CD4-positive, alpha-beta memory T cell (primary cell): ENCODE measurements at regions of chr13 and their contacts with region 1.

Region 1: DNA sequence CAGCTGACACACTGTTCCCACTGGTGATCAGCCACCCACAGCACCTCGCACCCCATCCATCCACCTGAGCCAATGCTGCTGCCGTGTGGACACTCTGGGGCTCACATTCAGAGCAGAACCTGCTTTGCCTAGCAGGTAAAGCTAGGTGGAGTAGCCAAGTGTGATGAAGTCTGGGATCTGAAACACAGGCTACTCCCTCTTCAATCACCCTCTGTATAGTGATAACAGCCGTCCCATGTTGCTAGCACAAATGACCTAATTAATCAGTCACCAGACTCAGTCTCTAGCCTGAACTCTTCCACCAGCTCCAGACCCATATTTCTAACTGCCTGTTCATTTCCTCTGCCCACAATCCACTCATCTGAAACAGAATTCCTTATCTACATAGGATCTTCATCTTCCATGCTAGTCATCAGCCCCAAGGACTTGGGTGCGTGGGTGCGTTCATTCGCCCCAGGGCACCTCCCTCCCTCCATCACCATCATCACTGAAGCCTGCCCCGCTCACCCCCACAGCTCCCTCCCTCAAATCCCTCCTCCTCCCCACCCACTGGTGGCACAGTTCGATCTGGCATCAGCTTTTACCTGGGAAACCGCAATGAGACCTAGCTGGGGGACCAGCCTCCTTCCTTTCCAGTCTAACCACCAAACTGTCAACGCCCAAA is 19.8 kb downstream of the STK24 start:
- DNase-seq: peak in 4 of 5 donors; percentile 42 to 67 (median 48)
- H3K4me3 ChIP-seq: no peak overlapping the region
- H3K4me3 Mint-ChIP-seq: peak overlapping the region; percentile 55 to 78 (median 72)
- H3K27ac ChIP-seq: peak overlapping the region; percentile 37
- H3K27ac Mint-ChIP-seq: peak overlapping the region; percentile 70 to 95 (median 84)
- H3K4me1 ChIP-seq: peaks cover 92% of the 10 kb centered on the region
- H3K4me1 Mint-ChIP-seq: peaks cover 67 to 93% (median 78%) of the 10 kb centered on the region in 4 donors
- H3K27me3 ChIP-seq: no peaks in the 10 kb centered on the region
- H3K27me3 Mint-ChIP-seq: no peaks in the 10 kb centered on the region

Region 2: GRCh38 chr13:98542568-98543377 is 14.3 kb before region 1 on chr13:
- CTCF ChIA-PET with region 1: interaction called, 6 read pairs
- POLR2A ChIA-PET with region 1: interaction called, 13 read pairs
- intact Hi-C with region 1: no loop called
- DNase-seq: peak in 2 of 5 donors; percentile 26 to 30
- H3K4me3 ChIP-seq: peak overlapping the region in 1 of 2 donors; percentile 17
- H3K4me3 Mint-ChIP-seq: peak overlapping the region; percentile 68 to 86 (median 81)
- H3K27ac ChIP-seq: peak overlapping the region; percentile 36
- H3K27ac Mint-ChIP-seq: peak overlapping the region; percentile 59 to 93 (median 87)
- H3K4me1 ChIP-seq: peaks cover 95% of the 10 kb centered on the region
- H3K4me1 Mint-ChIP-seq: peaks cover 76 to 98% (median 88%) of the 10 kb centered on the region in 4 donors
- H3K27me3 ChIP-seq: no peaks in the 10 kb centered on the region
- H3K27me3 Mint-ChIP-seq: no peaks in the 10 kb centered on the region

Region 3: GRCh38 chr13:98570929-98571372 is 13.9 kb after region 1 on chr13:
- CTCF ChIA-PET with region 1: interaction called, 10 read pairs
- POLR2A ChIA-PET with region 1: interaction called, 87 read pairs
- intact Hi-C with region 1: no loop called
- DNase-seq: peak; percentile 50 to 75 (median 61)
- H3K4me3 ChIP-seq: peak overlapping the region; percentile 77 to 90
- H3K4me3 Mint-ChIP-seq: peak overlapping the region; percentile 86 to 97 (median 94)
- H3K27ac ChIP-seq: peak overlapping the region; percentile 81
- H3K27ac Mint-ChIP-seq: peak overlapping the region; percentile 95 to 98 (median 98)
- H3K4me1 ChIP-seq: peaks cover 96% of the 10 kb centered on the region
- H3K4me1 Mint-ChIP-seq: peaks cover 70 to 99% (median 85%) of the 10 kb centered on the region in 4 donors
- H3K27me3 ChIP-seq: no peaks in the 10 kb centered on the region
- H3K27me3 Mint-ChIP-seq: no peaks in the 10 kb centered on the region

Region 4: GRCh38 chr13:98672944-98673545 is 115.9 kb after region 1 on chr13:
- CTCF ChIA-PET with region 1: no interaction called
- POLR2A ChIA-PET with region 1: no interaction called
- intact Hi-C with region 1: no loop called
- DNase-seq: peak; percentile 36 to 53 (median 46)
- H3K4me3 ChIP-seq: no peak overlapping the region
- H3K4me3 Mint-ChIP-seq: no peak overlapping the region
- H3K27ac ChIP-seq: no peak overlapping the region
- H3K27ac Mint-ChIP-seq: no peak overlapping the region
- H3K4me1 ChIP-seq: peaks cover 7% of the 10 kb centered on the region
- H3K4me1 Mint-ChIP-seq: peaks cover 0 to 1% (median 0%) of the 10 kb centered on the region in 4 donors
- H3K27me3 ChIP-seq: no peaks in the 10 kb centered on the region
- H3K27me3 Mint-ChIP-seq: peaks cover 2 to 4% of the 10 kb centered on the region in 2 donors

Region 5: GRCh38 chr13:98741741-98742435 is 184.8 kb after region 1 on chr13:
- CTCF ChIA-PET with region 1: no interaction called
- POLR2A ChIA-PET with region 1: no interaction called
- intact Hi-C with region 1: no loop called
- DNase-seq: no peak
- H3K4me3 ChIP-seq: no peak overlapping the region
- H3K4me3 Mint-ChIP-seq: no peak overlapping the region
- H3K27ac ChIP-seq: no peak overlapping the region
- H3K27ac Mint-ChIP-seq: no peak overlapping the region
- H3K4me1 ChIP-seq: no peaks in the 10 kb centered on the region
- H3K4me1 Mint-ChIP-seq: no peaks in the 10 kb centered on the region
- H3K27me3 ChIP-seq: no peaks in the 10 kb centered on the region
- H3K27me3 Mint-ChIP-seq: peaks cover 1 to 3% of the 10 kb centered on the region in 2 donors